ENCODE measurements at regions of chr10 and their contacts with region 1.

Region 1: DNA sequence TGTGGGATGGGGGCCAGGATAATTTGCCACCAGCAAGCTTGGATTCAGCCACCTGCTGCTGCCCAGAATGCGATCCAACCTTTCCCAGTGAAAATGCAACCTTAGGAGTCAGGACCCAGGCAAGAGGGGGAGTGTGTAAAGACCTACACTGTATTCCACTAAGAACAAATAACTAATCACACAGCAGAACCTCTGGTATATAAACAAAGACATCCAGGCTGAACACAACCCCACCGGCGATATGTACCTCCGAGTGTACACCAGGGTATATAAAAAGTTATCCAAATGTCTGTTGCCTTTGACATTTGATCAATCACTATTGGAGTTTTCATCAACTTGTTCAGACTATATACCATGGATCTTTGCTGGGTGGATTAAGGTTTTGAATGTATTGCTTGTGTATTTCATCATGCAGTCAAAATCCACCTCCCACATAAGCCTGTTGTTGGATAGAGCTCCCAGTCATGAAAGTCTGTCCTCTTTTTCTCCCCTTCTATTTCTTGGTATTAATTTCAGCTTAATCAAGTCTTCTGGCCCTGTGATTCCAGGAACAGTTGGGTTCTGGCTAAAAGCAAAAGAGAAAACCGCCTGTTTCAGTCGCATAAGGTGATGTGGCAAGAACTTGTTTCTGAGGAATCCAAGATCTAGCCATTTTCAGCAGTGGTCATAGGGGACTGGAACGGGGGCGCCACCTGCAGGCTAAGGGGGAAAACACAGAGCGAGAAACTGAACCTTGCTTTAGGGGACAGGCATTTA is 290.7 kb downstream of the CCDC3 start:
- DNase-seq: peak; percentile 62 to 87 (median 82)
- H3K4me3 ChIP-seq: no peak overlapping the region
- H3K27ac ChIP-seq: peak overlapping the region in 1 of 2 donors; percentile 37
- H3K4me1 ChIP-seq: peaks cover 9% of the 10 kb centered on the region
- H3K27me3 ChIP-seq: no peaks in the 10 kb centered on the region
- CTCF ChIP-seq: peak; percentile 67 to 87 (median 82)
- EP300 ChIP-seq: no peak
- POLR2A ChIP-seq: peak; percentile 28

Region 2: DNA sequence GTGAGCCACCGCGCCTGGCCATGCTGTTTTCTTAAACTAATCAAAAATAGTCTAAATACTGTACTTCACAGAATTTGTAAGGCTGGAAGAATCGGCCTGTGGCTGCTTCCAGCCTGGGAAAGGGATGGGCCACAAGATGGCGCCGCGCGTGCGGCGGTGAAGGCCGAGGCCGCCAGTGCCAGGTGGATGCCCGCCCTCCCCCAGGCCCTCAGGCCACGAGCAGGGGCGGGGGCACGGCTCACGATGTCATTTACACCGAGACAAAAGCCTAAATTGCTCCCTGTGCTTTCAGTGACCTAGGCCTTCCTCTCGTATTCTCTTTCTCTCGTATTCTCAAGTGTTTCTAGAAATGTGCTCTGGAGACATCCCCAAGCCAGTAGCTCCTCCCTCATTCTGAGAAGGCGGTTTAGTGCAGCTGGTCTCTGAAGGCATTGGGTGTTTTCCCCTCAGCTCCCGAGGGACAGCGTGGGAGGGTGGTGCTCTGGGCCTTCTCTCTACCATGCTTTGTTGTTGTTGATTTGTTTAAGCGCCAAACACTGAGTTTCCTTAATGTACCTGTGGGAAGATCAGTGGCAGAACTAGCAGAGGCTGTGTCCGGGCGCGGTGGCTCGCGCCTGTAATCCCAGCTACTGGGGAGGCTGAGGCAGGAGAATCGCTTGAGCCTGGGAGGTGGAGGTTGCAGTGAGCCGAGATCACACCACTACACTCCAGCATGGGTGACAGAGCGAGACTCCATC is 446.4 kb before region 1 on chr10:
- intact Hi-C with region 1: loop called (anchors 2 to 10 kb)
- DNase-seq: peak; percentile 69 to 87 (median 78)
- H3K4me3 ChIP-seq: no peak overlapping the region
- H3K27ac ChIP-seq: no peak overlapping the region
- H3K4me1 ChIP-seq: no peaks in the 10 kb centered on the region
- H3K27me3 ChIP-seq: no peaks in the 10 kb centered on the region
- CTCF ChIP-seq: peak; percentile 74 to 84 (median 77)
- EP300 ChIP-seq: no peak
- POLR2A ChIP-seq: no peak

Region 3: GRCh38 chr10:12350167-12350872 is 360.5 kb before region 1 on chr10:
- intact Hi-C with region 1: loop called in 1 of 4 experiments (anchors 10 kb)
- DNase-seq: peak in 4 of 5 donors; percentile 18 to 48 (median 27)
- H3K4me3 ChIP-seq: peak overlapping the region; percentile 75
- H3K27ac ChIP-seq: no peak overlapping the region
- H3K4me1 ChIP-seq: peaks cover 8% of the 10 kb centered on the region
- H3K27me3 ChIP-seq: no peaks in the 10 kb centered on the region
- CTCF ChIP-seq: no peak
- EP300 ChIP-seq: no peak
- POLR2A ChIP-seq: no peak

Region 4: GRCh38 chr10:12431151-12432101 is 279.3 kb before region 1 on chr10:
- intact Hi-C with region 1: no loop called
- DNase-seq: no peak
- H3K4me3 ChIP-seq: no peak overlapping the region
- H3K27ac ChIP-seq: no peak overlapping the region
- H3K4me1 ChIP-seq: no peaks in the 10 kb centered on the region
- H3K27me3 ChIP-seq: no peaks in the 10 kb centered on the region
- CTCF ChIP-seq: no peak
- EP300 ChIP-seq: no peak
- POLR2A ChIP-seq: no peak

Region 5: DNA sequence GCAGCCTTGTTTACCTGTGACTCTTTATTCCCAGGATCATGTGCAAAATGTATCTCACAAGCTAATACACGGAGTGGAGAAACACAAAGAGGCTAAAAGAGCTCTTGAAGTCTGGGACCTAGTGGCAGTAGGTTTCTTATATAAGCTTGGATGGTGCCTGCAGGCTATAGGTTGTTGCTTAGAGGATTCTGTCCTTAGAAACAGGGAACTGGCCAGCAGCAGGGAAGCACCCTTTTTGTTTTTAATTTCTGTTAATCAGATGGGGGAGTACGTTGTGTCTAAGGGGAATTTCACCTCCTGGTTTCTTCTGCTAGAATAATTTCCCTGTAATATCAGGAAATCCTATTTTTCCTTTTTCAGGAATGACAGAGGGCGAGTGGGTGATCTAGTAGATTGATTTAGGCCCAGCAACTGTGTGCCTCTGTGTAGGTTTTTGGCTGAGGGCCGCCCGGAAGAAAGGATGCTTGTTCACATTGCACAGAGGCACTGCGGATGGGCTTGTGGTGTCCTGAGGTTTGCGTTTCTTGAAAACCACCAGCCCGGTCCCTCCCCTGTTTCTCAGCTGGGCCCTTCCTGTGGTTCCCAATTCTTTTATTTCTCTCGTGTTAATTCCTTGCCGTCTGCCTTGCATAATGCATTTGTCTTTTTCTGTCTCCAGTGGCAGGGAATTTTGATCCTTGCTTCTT is 203.5 kb before region 1 on chr10:
- intact Hi-C with region 1: loop called in 1 of 4 experiments (anchors 5 kb)
- DNase-seq: peak in 1 of 5 donors; percentile 1
- H3K4me3 ChIP-seq: no peak overlapping the region
- H3K27ac ChIP-seq: no peak overlapping the region
- H3K4me1 ChIP-seq: no peaks in the 10 kb centered on the region
- H3K27me3 ChIP-seq: no peaks in the 10 kb centered on the region
- CTCF ChIP-seq: no peak
- EP300 ChIP-seq: no peak
- POLR2A ChIP-seq: no peak

Region 6: DNA sequence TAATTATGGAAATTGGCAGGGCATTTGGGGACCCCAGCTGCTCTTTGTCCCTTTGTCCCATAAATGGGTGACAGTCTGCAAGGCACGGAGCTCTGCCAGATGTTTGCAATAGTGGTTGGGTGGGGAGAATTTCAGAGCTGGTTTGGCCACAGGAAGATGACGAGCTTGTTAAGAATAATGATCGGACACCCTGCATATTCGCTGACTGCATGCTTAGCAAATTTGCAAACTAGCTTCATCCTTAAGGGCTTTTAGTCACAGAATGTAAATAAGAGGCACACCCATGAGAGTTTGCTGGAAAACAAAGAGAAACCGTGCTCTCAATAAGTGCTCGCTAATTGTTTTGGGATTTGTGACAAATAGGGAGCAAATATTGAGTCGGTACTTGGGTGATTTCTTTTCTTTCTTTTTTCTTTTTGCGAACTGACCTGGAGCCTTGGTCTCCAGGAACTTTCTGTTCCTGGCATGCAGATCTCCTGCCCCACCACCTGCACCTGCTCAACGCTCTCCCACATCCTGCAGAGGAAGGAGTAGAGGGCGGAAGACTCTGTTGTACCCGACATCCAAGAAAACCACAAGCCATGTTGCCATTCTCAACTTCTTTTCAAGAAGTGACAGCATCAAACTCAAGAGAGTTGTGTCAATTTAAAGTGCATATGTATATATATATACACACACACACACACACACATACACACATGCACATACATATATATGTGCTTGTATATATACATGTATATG is 122.5 kb before region 1 on chr10:
- intact Hi-C with region 1: no loop called
- DNase-seq: no peak
- H3K4me3 ChIP-seq: no peak overlapping the region
- H3K27ac ChIP-seq: no peak overlapping the region
- H3K4me1 ChIP-seq: peaks cover 1% of the 10 kb centered on the region
- H3K27me3 ChIP-seq: no peaks in the 10 kb centered on the region
- CTCF ChIP-seq: no peak
- EP300 ChIP-seq: no peak
- POLR2A ChIP-seq: no peak

Region 7: GRCh38 chr10:12750525-12751201 is 39.9 kb after region 1 on chr10:
- intact Hi-C with region 1: no loop called
- DNase-seq: no peak
- H3K4me3 ChIP-seq: no peak overlapping the region
- H3K27ac ChIP-seq: no peak overlapping the region
- H3K4me1 ChIP-seq: no peaks in the 10 kb centered on the region
- H3K27me3 ChIP-seq: no peaks in the 10 kb centered on the region
- CTCF ChIP-seq: no peak
- EP300 ChIP-seq: no peak
- POLR2A ChIP-seq: no peak

Region 8: DNA sequence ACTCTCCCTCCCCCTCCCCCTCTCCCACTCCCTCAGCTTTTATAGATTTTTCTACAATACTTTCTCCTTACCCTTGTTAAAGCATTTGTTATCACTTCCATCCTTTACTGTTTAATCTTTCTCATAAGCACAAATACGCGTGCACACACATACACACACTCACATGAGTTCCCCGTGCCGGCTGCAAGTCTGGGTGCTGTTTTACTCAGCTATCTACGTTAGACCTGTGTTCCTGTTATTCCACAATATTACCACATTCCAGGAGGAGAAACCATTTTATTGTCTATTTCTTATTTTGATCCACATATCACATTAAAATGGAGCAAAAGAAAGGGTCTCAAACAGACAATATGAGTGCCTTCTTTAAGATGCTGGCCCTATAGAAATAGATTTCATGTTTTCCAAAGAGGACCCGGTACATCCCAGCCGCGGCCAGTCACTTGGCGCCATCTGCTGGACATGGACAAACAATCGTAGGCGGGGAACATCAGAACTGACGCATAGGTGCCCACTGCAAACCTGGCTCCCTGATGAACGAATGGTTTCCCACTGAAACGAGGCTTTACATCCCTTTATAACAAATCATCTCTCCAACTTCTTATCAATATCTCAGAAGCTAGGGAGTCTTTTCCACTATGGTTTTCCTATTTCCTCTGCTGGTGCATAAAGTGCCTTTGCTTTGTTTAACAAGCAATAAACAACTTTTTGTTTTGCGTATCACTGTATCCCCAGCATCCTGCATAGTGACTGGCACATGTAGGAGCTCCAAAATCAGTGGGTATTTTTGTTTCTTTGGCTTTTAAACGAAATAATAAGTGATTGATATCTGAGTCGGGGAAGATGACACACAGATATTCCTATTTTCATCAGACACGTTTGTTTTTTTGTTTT is 364.0 kb after region 1 on chr10:
- intact Hi-C with region 1: loop called in 3 of 4 experiments (anchors 5 kb)
- DNase-seq: peak; percentile 63 to 77 (median 76)
- H3K4me3 ChIP-seq: no peak overlapping the region
- H3K27ac ChIP-seq: no peak overlapping the region
- H3K4me1 ChIP-seq: no peaks in the 10 kb centered on the region
- H3K27me3 ChIP-seq: no peaks in the 10 kb centered on the region
- CTCF ChIP-seq: peak; percentile 69 to 79 (median 71)
- EP300 ChIP-seq: no peak
- POLR2A ChIP-seq: no peak